ENCODE measurements at regions of chr14 and their contacts with region 1.

Region 1: DNA sequence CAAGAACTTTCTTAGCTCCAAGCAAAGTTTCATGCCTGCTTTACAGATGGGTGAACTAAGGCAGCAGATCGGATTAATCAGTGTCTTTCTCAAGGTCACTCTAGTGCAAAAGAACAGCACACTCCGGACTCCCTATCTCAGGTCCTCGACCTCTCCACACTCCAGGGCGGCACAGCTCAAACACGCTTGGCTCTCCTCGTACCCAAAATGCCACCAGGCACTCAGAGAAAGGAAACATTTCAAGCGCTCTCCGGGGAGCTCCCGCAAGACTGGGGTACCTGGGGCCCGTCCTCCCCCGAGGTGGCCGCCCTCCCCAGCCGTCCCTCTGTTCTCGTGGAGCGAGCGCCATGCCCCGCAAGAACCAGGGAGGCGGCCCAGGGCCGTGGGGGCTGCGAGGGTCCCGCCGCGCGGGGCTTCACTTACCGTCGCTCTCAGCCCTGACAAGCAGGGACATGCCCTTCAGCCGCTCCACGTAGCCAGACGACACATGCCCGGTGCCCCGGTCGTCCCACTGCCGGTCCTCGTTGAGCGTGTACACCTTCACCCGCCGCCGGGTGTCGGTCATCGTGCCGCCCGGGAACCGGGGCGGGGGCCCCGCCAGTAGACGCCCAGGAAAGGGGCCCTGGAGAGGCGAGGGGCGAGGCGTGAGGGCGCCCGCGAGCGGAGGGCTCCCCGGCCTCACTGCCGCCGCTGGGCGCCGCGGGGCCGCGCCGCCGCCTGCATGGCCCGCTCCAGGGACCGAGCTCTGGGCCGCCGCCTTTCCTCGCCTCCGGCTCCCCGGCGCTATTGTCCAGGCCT is 828 bp downstream of the PPP4R3A start:
- DNase-seq: peak; percentile 47
- H3K4me3 ChIP-seq: peak overlapping the region; percentile 91
- H3K27ac ChIP-seq: peak overlapping the region; percentile 99
- H3K4me1 ChIP-seq: peaks cover 8% of the 10 kb centered on the region
- H3K27me3 ChIP-seq: no peaks in the 10 kb centered on the region
- CTCF ChIP-seq: no peak

Region 2: GRCh38 chr14:91911474-91912032 is 402.3 kb after region 1 on chr14:
- intact Hi-C with region 1: loop called (anchors 10 kb)
- DNase-seq: peak; percentile 39
- H3K4me3 ChIP-seq: no peak overlapping the region
- H3K27ac ChIP-seq: no peak overlapping the region
- H3K4me1 ChIP-seq: peaks cover 3% of the 10 kb centered on the region
- H3K27me3 ChIP-seq: no peaks in the 10 kb centered on the region
- CTCF ChIP-seq: peak; percentile 49